Psoas muscle (tissue), 8 donors: ENCODE measurements at regions of chr11 and their contacts with region 1.

Region 1: DNA sequence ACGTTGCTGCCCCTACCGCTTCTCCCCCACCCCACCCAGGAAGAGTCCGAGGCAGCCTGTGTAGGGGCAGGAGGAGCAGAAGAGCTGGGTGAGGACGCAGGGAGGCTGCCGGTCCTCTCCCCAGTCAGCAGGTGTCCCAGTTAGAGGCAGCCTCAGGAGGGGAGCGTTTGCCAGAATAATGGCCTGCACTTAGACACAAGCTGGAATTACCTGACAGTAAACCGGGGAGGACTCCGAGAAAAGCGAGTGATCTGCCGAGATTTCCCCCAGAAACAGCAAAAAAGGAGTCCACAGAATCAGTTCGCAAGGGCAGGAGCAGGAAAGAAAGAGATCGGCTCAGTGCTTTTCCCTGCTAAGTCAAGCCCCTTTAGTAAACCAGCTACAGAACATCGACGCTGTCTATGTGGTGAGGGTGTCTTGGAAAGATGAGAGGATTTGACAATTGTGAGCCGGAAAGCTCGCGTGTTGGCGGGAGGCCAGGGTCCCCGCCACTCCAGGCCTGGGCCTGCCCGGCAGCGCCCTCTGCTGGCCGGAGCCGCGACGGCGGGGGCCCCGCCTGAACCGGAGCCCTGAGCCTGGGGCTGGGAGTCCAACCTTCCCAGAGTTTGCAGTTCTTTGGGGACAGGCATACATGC is 17.7 kb upstream of the THRSP start:
- DNase-seq: peak; percentile 86 to 91
- ATAC-seq: peak; percentile 93 to 98 (median 96)
- H3K4me3 ChIP-seq: peak overlapping the region; percentile 72
- H3K27ac ChIP-seq: peak overlapping the region; percentile 81
- H3K4me1 ChIP-seq: no peaks in the 10 kb centered on the region
- H3K27me3 ChIP-seq: no peaks in the 10 kb centered on the region
- CTCF ChIP-seq: peak; percentile 97

Region 2: DNA sequence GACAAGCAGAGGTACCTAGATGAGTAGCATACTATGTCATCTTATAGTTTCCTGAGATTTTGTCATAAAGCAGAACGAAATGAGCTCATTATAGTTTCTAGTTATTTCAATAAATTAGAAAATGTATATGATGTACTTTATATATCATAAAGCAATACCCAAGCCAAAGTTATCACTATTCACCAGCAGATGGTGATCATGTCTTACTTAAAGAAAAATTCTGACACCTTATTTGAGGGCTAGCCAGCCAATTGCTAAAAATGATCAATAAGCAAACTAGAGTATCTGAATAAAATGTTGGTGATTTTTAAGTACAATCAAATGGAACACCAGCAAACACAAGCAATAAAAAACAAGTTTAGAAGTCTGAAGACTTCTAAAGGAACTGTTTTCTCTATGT is 269.5 kb before region 1 on chr11:
- intact Hi-C with region 1: loop called in 1 of 2 experiments (anchors 10 kb)
- DNase-seq: no peak
- ATAC-seq: peak in 1 of 4 donors; percentile 49
- H3K4me3 ChIP-seq: no peak overlapping the region
- H3K27ac ChIP-seq: no peak overlapping the region
- H3K4me1 ChIP-seq: no peaks in the 10 kb centered on the region
- H3K27me3 ChIP-seq: no peaks in the 10 kb centered on the region
- CTCF ChIP-seq: peak; percentile 45

Region 3: DNA sequence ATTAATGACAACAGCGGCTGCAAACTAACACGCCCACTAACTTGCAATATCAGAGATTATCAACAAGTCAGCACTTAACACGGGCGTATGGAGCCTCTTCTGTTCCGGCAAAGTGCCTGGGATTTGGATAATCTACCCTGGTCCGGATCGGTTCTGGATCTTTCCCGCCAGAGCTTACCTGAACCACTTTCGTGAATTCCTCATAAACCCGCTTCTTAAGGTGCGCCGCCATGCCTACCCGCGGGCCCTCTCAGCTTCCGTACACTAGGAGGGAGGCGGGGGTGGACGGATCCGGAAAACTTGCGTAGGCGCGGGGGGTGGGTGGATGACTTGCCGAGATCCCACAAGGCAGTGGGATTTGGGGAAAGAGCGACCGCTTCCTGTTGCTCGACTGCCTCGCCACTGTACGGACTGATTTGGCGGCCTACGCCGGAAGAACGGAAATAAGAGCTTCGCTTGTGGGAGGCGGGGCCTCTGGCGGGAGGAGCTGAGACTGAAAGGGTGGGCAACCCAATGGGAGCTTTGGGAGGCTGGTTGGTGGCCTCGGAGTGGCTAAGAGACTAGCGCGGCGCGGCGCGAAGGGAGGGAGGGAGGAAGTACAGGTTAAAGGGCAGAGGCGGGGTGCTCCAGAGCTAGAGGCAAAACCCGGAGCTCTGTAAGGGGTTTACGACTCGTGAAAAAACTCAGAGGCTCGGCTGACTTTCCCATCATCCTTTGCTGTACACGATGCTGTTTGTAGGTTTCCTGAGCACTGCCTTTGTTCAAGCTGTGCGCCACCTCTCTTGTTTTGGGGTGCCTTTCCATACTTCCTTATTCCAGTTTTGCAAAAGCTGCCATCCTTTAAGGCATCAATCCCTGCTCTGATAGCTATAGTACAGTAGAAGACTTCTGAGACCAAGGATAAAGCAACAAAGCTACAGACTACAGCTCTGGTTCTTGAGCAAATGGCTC is 51.3 kb before region 1 on chr11 and contains the start of gene INTS4:
- intact Hi-C with region 1: loop called (anchors 2 to 5 kb)
- DNase-seq: peak; percentile 99 to 100
- ATAC-seq: peak; percentile 99
- H3K4me3 ChIP-seq: peak within 1 kb of the TSS; percentile 88
- H3K27ac ChIP-seq: peak within 1 kb of the TSS; percentile 88
- H3K4me1 ChIP-seq: peaks cover 13% of the 10 kb centered on the region
- H3K27me3 ChIP-seq: no peaks in the 10 kb centered on the region
- CTCF ChIP-seq: no peak
- total RNA-seq, gene INTS4: 12.1 to 18.6 (median 14.6) TPM